Endothelial cell of umbilical vein (primary cell): ENCODE measurements at regions of chr1 and their contacts with region 1.

Region 1: DNA sequence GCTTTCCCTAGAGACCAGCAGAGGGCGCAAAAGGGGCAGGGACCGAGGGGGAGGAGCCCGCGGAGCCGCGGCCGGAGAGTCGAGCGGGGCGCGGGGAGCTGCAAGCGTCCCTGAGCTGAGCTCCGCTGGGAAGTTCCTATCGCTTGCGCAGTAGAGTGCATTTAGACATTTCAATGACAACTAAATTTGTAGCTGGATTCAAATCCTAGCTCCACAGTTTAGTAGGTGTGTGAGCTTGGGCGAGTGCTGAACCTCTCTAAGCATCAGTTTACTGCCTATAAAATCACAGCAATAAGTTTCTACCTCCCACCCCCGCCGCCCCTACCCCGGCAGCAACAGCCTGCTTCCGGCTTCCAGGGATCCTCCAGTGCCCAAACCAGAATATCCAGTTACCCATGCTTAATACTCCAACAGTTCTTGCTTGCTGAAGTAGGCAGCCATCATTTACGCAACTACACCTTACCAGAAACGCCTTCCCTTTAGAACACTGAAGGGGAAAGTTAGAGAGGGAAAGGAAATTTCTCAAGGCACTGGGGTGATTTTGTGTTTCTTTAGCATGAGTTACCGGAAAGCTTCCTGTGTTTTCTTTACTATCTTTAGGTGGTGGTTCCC is 9.1 kb downstream of the TLR5 start:
- DNase-seq: peak; percentile 79
- H3K4me3 ChIP-seq: peak overlapping the region in 2 of 3 experiments; percentile 2 to 50
- H3K27ac ChIP-seq: no peak overlapping the region
- H3K4me1 ChIP-seq: peaks cover 8% of the 10 kb centered on the region
- H3K27me3 ChIP-seq: peaks cover 30 to 31% of the 10 kb centered on the region in 2 experiments
- CTCF ChIP-seq: peak; percentile 94 to 98
- POLR2A ChIP-seq: no peak

Region 2: GRCh38 chr1:222736972-222737371 is 397.0 kb before region 1 on chr1 and contains the start of gene FAM177B:
- CTCF ChIA-PET with region 1: interaction called, 11 read pairs
- POLR2A ChIA-PET with region 1: no interaction called
- dilution Hi-C with region 1: no loop called
- intact Hi-C with region 1: no loop called
- DNase-seq: no peak
- H3K4me3 ChIP-seq: no peak within 1 kb of the TSS
- H3K27ac ChIP-seq: no peak within 1 kb of the TSS
- H3K4me1 ChIP-seq: no peaks in the 10 kb centered on the region
- H3K27me3 ChIP-seq: no peaks in the 10 kb centered on the region
- CTCF ChIP-seq: no peak
- POLR2A ChIP-seq: no peak
- total RNA-seq, gene FAM177B: not detected in 2 replicates

Region 3: DNA sequence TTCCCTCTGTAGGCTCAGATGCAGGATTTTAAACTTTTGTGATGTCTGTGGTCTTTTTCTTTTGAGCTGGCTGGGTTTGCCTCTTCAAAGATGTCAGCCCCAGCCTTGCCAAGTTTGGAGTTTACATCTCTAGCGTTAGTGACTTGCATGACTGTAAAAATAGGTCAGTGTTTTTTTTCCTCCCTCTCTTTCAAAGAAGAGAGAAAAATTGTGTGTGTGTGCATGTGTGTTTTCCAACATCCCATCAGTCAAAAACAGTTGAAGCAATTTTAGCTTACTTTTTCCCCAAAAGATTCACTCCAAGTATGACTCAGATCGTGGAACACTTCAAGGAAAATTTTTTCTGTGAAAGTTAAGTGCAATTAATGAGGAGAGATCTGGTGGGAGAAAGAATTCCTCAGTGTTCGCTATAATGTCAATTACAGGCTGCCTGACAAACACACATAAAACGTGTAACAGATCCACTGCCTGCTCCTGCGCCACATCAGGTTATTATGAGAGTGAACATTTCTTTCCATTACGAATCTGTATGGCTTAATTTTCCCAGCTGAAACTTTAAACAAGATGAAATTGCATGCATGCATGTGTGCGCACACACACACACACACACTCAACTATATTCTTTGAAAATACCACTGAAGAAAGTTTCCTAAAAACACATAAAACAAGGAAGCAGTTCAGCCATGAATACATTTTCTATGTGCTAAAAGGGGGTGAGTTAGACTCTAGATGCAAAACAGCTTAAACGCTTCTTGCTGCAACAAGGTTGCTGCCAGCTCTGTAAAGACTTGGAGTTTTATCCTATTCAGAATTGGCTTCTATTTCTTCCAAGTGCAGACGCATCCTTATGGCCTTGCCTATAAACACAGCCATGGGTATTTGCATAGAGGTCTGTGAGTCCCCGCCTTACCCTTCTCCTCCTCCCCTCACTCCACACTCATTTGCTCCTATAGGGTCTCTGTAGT is 46.4 kb before region 1 on chr1:
- CTCF ChIA-PET with region 1: interaction called, 30 read pairs
- POLR2A ChIA-PET with region 1: no interaction called
- dilution Hi-C with region 1: no loop called
- intact Hi-C with region 1: no loop called
- DNase-seq: no peak
- H3K4me3 ChIP-seq: no peak overlapping the region
- H3K27ac ChIP-seq: no peak overlapping the region
- H3K4me1 ChIP-seq: no peaks in the 10 kb centered on the region
- H3K27me3 ChIP-seq: peaks cover 0 to 8% of the 10 kb centered on the region in 2 experiments
- CTCF ChIP-seq: no peak
- POLR2A ChIP-seq: no peak

Region 4: DNA sequence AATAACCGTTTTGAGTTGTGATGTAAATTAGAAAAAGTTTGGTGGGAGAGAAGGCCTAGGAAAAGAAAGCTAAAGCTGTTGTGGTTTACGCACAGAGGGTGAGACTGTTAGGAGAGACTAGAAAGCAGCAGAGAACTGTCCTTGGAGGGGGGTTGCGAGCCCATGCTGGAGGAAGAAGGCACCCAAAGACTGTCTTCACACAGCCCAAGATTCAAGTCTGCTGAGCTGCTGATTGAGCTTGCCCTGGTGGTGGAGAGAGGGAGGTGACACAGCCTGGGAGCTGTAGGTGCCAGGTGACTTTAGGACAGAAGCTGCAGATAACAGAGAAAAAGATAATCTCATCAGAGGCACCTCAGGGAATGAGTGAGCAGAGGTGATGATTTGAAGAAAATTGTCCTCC is 27.4 kb after region 1 on chr1:
- CTCF ChIA-PET with region 1: interaction called, 14 read pairs
- POLR2A ChIA-PET with region 1: no interaction called
- dilution Hi-C with region 1: no loop called
- intact Hi-C with region 1: no loop called
- DNase-seq: no peak
- H3K4me3 ChIP-seq: no peak overlapping the region
- H3K27ac ChIP-seq: no peak overlapping the region
- H3K4me1 ChIP-seq: no peaks in the 10 kb centered on the region
- H3K27me3 ChIP-seq: peaks cover 0 to 3% of the 10 kb centered on the region in 2 experiments
- CTCF ChIP-seq: no peak
- POLR2A ChIP-seq: no peak

Region 5: GRCh38 chr1:223363856-223364684 is 230.1 kb after region 1 on chr1 and contains the start of gene SUSD4:
- CTCF ChIA-PET with region 1: interaction called, 9 read pairs
- POLR2A ChIA-PET with region 1: interaction called, 4 read pairs
- dilution Hi-C with region 1: no loop called
- intact Hi-C with region 1: loop called (anchors 10 kb)
- DNase-seq: no peak
- H3K4me3 ChIP-seq: peak within 1 kb of the TSS in 1 of 3 experiments; percentile 29
- H3K27ac ChIP-seq: no peak within 1 kb of the TSS
- H3K4me1 ChIP-seq: no peaks in the 10 kb centered on the region
- H3K27me3 ChIP-seq: peaks cover 31 to 40% of the 10 kb centered on the region in 2 experiments
- CTCF ChIP-seq: no peak
- POLR2A ChIP-seq: no peak
- total RNA-seq, gene SUSD4: not detected in 2 replicates

Region 6: DNA sequence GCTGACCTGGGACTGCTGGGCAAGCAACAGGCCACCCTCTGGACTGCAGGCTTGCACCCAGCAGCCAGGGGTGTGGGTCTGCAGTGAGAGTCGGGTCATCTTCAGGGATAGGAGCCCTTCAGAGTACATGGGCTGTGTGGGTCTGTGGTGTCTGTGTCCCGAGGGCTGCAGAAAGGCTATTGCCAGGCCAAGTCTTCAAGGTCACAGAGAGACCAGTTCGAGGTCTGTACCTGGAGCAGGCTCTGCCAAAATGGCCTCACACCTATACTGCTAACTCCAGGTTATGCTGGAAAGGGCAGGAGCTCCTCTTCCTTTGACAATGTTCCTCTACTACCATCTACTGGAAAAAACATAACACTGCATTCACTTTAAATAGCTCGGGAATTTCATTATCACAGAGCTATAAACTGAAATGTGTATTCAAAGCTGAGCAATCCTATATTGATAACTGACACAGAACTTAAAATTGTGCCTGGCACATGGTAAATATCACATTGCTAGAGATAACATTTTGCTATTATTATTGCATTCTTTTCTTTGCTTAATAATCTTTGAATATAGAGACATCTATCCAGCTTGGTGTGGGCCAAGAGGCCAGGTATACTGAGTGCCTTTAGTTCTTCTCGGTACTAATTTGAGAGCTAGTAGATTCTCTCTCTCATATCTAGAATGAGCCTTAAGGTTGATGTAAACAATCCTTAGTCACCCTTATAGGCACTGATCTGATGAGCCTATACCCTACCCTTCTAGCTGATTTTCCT is 1788.7 kb after region 1 on chr1:
- CTCF ChIA-PET with region 1: interaction called, 14 read pairs
- POLR2A ChIA-PET with region 1: no interaction called
- dilution Hi-C with region 1: no loop called
- intact Hi-C with region 1: no loop called
- DNase-seq: peak; percentile 24
- H3K4me3 ChIP-seq: no peak overlapping the region
- H3K27ac ChIP-seq: no peak overlapping the region
- H3K4me1 ChIP-seq: no peaks in the 10 kb centered on the region
- H3K27me3 ChIP-seq: peaks cover 0 to 4% of the 10 kb centered on the region in 2 experiments
- CTCF ChIP-seq: peak; percentile 44 to 45
- POLR2A ChIP-seq: no peak